Panc1 (cell line): ENCODE measurements at regions of chr7 and their contacts with region 1.

Region 1: DNA sequence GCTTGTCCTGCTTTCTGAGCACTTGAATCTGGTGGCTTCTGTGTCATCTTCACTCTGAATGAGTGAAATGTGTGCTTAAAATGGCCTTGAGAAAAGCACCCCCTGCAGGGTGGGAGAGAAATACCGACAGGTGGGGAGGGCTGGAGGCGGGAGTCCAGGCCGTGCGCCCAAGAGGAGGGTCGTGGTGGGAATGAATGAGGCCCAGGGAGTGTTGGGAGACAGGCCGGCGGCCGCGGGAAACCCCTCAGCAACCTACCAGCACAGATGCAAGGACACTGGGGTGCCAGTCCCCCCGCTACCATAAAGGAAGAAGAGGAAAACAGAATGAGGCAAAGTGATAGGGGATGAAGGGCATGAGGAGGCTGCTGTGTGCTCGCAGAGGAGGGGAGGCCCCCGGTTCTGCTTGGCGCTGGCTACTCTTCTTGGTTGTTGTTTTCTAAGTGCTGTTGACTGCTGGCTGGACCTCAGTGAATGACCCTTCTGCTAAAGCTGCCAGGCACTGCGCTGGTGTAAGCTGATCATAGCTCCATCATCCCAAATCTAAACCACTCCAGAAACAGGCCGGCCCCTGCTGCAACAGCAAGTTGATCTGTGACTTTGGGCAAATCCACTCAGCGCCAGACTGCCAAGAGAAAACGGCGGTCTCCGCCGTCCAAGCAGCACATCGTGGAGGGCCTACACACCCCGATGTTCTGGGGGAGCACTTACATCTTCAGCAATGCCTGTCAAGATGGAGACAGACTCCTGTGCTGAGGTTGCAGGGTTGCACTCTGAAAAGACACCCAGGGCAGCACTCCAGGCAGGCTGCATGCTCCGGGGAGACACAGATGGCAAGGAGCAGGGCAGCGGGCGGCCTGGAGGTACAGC is 378.5 kb downstream of the DNAJB6 start:
- DNase-seq: no peak
- ATAC-seq: no peak
- H3K4me3 ChIP-seq: no peak overlapping the region
- H3K27ac ChIP-seq: no peak overlapping the region
- H3K4me1 ChIP-seq: no peaks in the 10 kb centered on the region
- H3K27me3 ChIP-seq: no peaks in the 10 kb centered on the region; the same call in 1 of the 2 replicates
- CTCF ChIP-seq: no peak

Region 2: DNA sequence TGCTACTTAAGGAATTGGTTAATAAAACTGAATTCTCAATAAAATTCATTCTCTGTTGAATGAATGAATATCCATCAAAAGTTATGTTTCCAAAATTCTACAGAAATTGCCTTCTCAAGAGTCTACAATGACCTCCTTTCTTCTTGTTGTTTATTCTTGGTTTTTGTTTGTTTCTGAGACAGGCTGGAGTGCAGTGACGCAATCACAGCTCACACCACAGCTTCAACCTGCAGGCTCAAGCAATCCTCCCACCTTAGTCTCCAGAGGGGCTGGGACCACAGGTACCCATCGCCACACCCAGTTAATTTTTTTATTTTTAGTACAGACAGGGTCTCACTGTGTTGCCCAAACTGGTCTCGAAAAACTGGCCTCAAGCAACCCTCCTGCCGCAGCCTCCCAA is 919.9 kb before region 1 on chr7:
- CTCF ChIA-PET with region 1: no interaction called
- POLR2A ChIA-PET with region 1: no interaction called
- in situ Hi-C with region 1: no loop called
- intact Hi-C with region 1: no loop called
- DNase-seq: no peak
- ATAC-seq: no peak
- H3K4me3 ChIP-seq: no peak overlapping the region
- H3K27ac ChIP-seq: no peak overlapping the region
- H3K4me1 ChIP-seq: no peaks in the 10 kb centered on the region
- H3K27me3 ChIP-seq: no peaks in the 10 kb centered on the region
- CTCF ChIP-seq: no peak

Region 3: DNA sequence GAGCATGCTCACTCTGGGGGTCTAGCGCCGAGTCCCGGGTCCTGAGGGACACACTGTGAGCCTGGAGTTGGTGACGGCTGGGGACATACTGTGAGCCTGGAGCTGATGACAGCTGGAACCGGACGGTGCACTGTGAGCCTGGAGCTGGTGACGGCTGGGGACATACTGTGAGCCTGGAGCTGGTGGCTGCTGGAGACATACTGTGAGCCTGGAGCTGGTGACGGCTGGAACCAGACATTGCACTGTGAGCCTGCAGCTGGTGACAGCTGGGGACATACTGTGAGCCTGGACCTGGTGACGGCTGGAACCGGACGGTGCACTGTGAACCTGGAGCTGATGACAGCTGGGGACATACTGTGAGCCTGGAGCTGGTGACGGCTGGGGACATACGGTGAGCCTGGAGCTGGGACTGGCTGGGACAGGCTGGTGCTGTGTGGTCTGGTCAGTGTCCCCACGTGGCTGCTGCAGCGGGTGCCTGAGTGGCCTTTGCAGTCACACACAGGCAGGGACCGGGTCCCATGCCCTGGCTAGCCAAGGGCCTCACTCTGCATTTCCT is 824.4 kb after region 1 on chr7:
- CTCF ChIA-PET with region 1: no interaction called
- POLR2A ChIA-PET with region 1: interaction called, 15 read pairs
- in situ Hi-C with region 1: no loop called
- intact Hi-C with region 1: no loop called
- DNase-seq: no peak
- ATAC-seq: peak; percentile 36; the same call in 1 of the 2 replicates
- H3K4me3 ChIP-seq: no peak overlapping the region
- H3K27ac ChIP-seq: no peak overlapping the region
- H3K4me1 ChIP-seq: no peaks in the 10 kb centered on the region
- H3K27me3 ChIP-seq: no peaks in the 10 kb centered on the region
- CTCF ChIP-seq: no peak